ENCODE measurements at regions of chr2 and their contacts with region 1.

Region 1: GRCh38 chr2:207238831-207239701 is 73.3 kb upstream of the KLF7 start:
- DNase-seq: peak; percentile 100
- H3K4me3 ChIP-seq: no peak overlapping the region
- CTCF ChIP-seq: no peak

Region 2: GRCh38 chr2:206937555-206937954 is 301.5 kb before region 1 on chr2:
- CTCF ChIA-PET with region 1: no interaction called
- POLR2A ChIA-PET with region 1: no interaction called
- DNase-seq: no peak
- H3K4me3 ChIP-seq: no peak overlapping the region
- CTCF ChIP-seq: no peak

Region 3: DNA sequence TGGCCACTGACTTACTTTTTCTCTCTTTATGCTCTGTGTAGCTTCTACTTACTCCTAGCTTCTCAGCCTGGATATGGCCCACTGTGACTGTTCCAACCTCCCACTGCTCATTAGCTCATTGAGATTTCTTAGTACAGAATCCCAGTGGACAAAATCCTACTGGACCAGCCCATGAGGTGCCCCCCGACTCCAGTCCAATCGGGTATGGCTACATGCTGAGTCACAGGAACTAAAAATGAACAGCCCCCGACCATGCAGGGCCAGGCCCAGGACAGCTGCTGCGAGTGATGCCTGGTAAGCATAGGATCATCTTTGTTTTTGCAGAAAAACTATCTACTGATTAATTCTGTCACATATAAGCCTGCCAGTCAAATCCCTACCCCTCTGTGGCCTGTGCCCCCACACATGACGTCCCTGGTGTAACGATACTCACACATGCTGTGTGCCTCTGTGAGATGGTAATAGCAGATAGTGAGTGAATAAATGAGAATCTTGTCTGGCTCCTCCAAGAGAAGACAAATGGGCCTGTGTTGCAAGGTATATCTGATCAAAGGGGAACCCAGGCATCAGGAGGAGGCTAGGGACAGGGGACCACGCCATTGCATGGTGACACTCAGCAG is 12.6 kb after region 1 on chr2:
- CTCF ChIA-PET with region 1: interaction called, 25 read pairs
- POLR2A ChIA-PET with region 1: interaction called, 51 read pairs
- DNase-seq: no peak
- H3K4me3 ChIP-seq: no peak overlapping the region
- CTCF ChIP-seq: no peak

Region 4: GRCh38 chr2:207258263-207258991 is 19.4 kb after region 1 on chr2:
- CTCF ChIA-PET with region 1: interaction called, 25 read pairs
- POLR2A ChIA-PET with region 1: interaction called, 51 read pairs
- DNase-seq: peak; percentile 100
- H3K4me3 ChIP-seq: no peak overlapping the region
- CTCF ChIP-seq: peak; percentile 29

Region 5: GRCh38 chr2:207269038-207269437 is 30.0 kb after region 1 on chr2:
- CTCF ChIA-PET with region 1: no interaction called
- POLR2A ChIA-PET with region 1: no interaction called
- DNase-seq: no peak
- H3K4me3 ChIP-seq: no peak overlapping the region
- CTCF ChIP-seq: no peak